ENCODE measurements at regions of chr6 and their contacts with region 1.

Region 1: DNA sequence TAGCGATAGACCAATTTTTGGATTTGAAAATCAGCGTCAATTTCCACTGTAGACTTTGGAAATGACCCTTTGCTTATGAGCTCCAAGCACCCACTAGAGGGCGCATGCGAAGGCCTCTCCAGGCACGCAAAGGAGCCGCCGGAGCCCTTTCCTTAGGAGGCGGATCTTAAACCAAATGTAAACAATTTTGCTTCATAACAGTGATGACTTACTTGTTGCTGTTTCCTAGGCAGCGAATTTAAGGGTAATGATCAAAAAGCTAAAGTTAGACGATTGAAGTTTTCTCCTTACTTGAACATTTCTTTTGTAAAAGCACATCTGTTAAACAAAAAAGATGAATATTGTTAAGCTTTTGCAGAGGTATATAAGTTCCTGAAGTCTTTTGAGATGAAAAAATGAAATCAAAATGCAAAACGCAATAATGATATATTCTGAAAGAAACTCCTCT is 29.2 kb upstream of the EXOC2 start:
- DNase-seq: no peak
- ATAC-seq: peak; percentile 98
- H3K4me3 ChIP-seq: no peak overlapping the region
- H3K27ac ChIP-seq: no peak overlapping the region
- H3K4me1 ChIP-seq: no peaks in the 10 kb centered on the region
- H3K27me3 ChIP-seq: no peaks in the 10 kb centered on the region; a peak in 1 of 4 replicates
- CTCF ChIP-seq: peak; percentile 89 to 96 (median 92)
- EP300 ChIP-seq: no peak
- POLR2A ChIP-seq: no peak
- RAD21 ChIP-seq: peak; percentile 67

Region 2: GRCh38 chr6:328136-328670 is 393.9 kb before region 1 on chr6:
- CTCF ChIA-PET with region 1: no interaction called
- POLR2A ChIA-PET with region 1: no interaction called
- RAD21 ChIA-PET with region 1: no interaction called
- SMC1A ChIA-PET with region 1: no interaction called
- in situ Hi-C with region 1: no loop called
- intact Hi-C with region 1: no loop called
- DNase-seq: peak; percentile 100
- ATAC-seq: peak; percentile 76
- H3K4me3 ChIP-seq: peak overlapping the region; percentile 37
- H3K27ac ChIP-seq: peak overlapping the region; percentile 97
- H3K4me1 ChIP-seq: peaks cover 85% of the 10 kb centered on the region
- H3K27me3 ChIP-seq: no peaks in the 10 kb centered on the region
- CTCF ChIP-seq: no peak
- EP300 ChIP-seq: peak; percentile 87 to 96
- POLR2A ChIP-seq: no peak
- RAD21 ChIP-seq: 0 out of 2 replicates have a peak, but pooled peaks have one; percentile 32

Region 3: GRCh38 chr6:710601-711571 is 11.2 kb before region 1 on chr6:
- CTCF ChIA-PET with region 1: interaction called, 49 read pairs
- POLR2A ChIA-PET with region 1: no interaction called
- RAD21 ChIA-PET with region 1: interaction called, 3 read pairs
- SMC1A ChIA-PET with region 1: interaction called, 17 read pairs
- in situ Hi-C with region 1: no loop called
- intact Hi-C with region 1: no loop called
- DNase-seq: peak; percentile 66
- ATAC-seq: peak; percentile 95
- H3K4me3 ChIP-seq: peak overlapping the region; percentile 70
- H3K27ac ChIP-seq: peak overlapping the region; percentile 94
- H3K4me1 ChIP-seq: peaks cover 8% of the 10 kb centered on the region
- H3K27me3 ChIP-seq: no peaks in the 10 kb centered on the region
- CTCF ChIP-seq: no peak
- EP300 ChIP-seq: no peak
- POLR2A ChIP-seq: peak; percentile 77
- RAD21 ChIP-seq: no peak

Region 4: GRCh38 chr6:786946-787763 is 65.1 kb after region 1 on chr6:
- CTCF ChIA-PET with region 1: interaction called, 14 read pairs
- POLR2A ChIA-PET with region 1: no interaction called
- RAD21 ChIA-PET with region 1: interaction called, 3 read pairs
- SMC1A ChIA-PET with region 1: interaction called, 3 read pairs
- in situ Hi-C with region 1: no loop called
- intact Hi-C with region 1: loop called (anchors 2 kb)
- DNase-seq: no peak
- ATAC-seq: peak; percentile 70
- H3K4me3 ChIP-seq: no peak overlapping the region
- H3K27ac ChIP-seq: no peak overlapping the region
- H3K4me1 ChIP-seq: no peaks in the 10 kb centered on the region
- H3K27me3 ChIP-seq: no peaks in the 10 kb centered on the region
- CTCF ChIP-seq: peak; percentile 50 to 75 (median 71); a peak in 5 of 6 replicates
- EP300 ChIP-seq: no peak
- POLR2A ChIP-seq: no peak
- RAD21 ChIP-seq: peak; percentile 68

Region 5: GRCh38 chr6:1190366-1190765 is 468.3 kb after region 1 on chr6:
- CTCF ChIA-PET with region 1: no interaction called
- POLR2A ChIA-PET with region 1: no interaction called
- RAD21 ChIA-PET with region 1: no interaction called
- SMC1A ChIA-PET with region 1: no interaction called
- in situ Hi-C with region 1: no loop called
- intact Hi-C with region 1: no loop called
- DNase-seq: no peak
- ATAC-seq: no peak
- H3K4me3 ChIP-seq: no peak overlapping the region
- H3K27ac ChIP-seq: no peak overlapping the region
- H3K4me1 ChIP-seq: no peaks in the 10 kb centered on the region
- H3K27me3 ChIP-seq: no peaks in the 10 kb centered on the region
- CTCF ChIP-seq: no peak
- EP300 ChIP-seq: no peak
- POLR2A ChIP-seq: no peak
- RAD21 ChIP-seq: no peak

Region 6: GRCh38 chr6:1381481-1382330 is 659.6 kb after region 1 on chr6:
- CTCF ChIA-PET with region 1: interaction called, 9 read pairs
- POLR2A ChIA-PET with region 1: no interaction called
- RAD21 ChIA-PET with region 1: no interaction called
- SMC1A ChIA-PET with region 1: interaction called, 5 read pairs
- in situ Hi-C with region 1: no loop called
- intact Hi-C with region 1: loop called (anchors 5 kb)
- DNase-seq: no peak
- ATAC-seq: peak; percentile 90
- H3K4me3 ChIP-seq: no peak overlapping the region
- H3K27ac ChIP-seq: no peak overlapping the region
- H3K4me1 ChIP-seq: no peaks in the 10 kb centered on the region
- H3K27me3 ChIP-seq: peaks cover 25 to 48% of the 10 kb centered on the region in 2 experiments
- CTCF ChIP-seq: peak; percentile 64 to 75 (median 67)
- EP300 ChIP-seq: no peak
- POLR2A ChIP-seq: no peak
- RAD21 ChIP-seq: peak; percentile 81

Region 7: DNA sequence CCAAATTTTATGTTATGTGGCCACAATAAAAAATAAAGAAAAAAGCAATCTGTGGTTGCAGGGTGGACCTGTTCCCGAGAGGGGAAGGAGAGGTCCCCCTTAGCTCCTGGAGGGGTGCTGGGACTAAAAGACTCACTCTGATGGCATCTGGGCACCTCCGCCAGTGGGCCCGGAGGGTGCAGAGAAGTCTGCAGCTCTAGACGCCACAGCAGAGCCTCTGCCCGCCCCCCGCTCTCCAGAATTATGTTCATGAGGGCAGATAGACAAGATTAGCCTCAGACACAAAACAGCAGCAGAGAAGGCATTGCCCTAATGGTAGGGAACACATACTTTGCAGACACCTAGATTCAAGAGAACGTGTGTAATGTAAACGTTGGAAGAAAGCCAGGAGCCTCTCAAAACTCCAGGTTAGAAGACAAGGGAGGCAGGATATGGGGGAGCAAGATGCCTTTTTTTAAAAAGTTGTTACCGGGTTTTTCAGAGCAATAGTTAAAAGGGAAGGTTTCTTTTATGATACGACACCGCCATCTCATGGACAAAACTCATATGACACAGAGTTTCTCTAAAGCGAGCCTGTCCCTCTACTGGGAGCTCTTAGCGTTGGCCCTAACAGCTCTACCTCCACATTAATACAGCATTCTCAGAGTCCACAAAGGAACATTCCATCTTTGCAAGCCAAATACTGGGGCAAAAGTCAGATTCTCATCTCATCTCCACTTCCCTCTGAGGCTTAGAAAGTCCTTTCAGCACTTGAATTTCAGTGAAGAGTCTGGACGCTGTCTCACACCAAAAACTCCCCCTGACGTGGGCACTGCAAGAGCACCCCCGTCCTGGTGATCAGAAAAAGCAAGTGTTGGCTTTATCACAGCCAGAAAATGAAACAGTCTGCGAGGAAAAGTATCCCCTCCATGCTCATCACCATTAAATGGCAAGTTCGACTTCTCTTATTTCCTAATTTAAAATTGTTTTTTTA is 714.5 kb after region 1 on chr6:
- CTCF ChIA-PET with region 1: interaction called, 8 read pairs
- POLR2A ChIA-PET with region 1: no interaction called
- RAD21 ChIA-PET with region 1: interaction called, 7 read pairs
- SMC1A ChIA-PET with region 1: interaction called, 4 read pairs
- in situ Hi-C with region 1: no loop called
- intact Hi-C with region 1: loop called (anchors 5 kb)
- DNase-seq: peak; percentile 30
- ATAC-seq: peak; percentile 92
- H3K4me3 ChIP-seq: no peak overlapping the region
- H3K27ac ChIP-seq: no peak overlapping the region
- H3K4me1 ChIP-seq: no peaks in the 10 kb centered on the region
- H3K27me3 ChIP-seq: peaks cover 0 to 3% of the 10 kb centered on the region in 2 experiments; a peak in 3 of 4 replicates
- CTCF ChIP-seq: peak; percentile 57 to 82 (median 68); a peak in 5 of 6 replicates
- EP300 ChIP-seq: no peak
- POLR2A ChIP-seq: no peak
- RAD21 ChIP-seq: peak; percentile 78

Region 8: DNA sequence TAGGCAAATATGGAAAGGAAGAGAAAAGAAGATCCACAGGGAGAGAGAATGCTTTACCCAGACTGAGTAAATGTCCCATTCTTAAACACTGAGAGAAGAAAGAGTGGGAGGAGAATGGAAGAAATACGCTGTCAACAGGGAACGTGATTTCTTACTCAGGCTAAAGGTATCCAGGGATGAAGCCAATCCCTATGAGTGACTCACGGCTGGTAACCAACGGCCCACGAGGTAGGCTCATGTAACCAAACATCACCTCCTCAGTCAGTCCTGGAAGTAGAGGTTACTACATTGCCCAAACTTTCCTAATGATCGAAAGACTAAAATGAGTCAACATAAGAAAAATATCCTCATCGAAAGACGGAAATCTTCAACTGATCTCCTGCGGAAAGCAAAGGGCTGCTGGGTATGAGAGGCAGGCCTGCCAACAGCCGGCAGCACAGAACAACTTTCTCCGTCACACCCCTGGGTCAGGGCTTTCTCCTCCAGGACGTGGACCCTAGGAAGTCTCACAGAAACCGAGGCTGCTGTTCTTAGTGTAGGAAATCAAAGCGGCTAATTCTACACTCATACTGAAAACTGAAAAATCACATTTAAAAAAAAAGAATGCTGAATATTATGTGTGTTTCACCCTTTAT is 1230.7 kb after region 1 on chr6:
- CTCF ChIA-PET with region 1: no interaction called
- POLR2A ChIA-PET with region 1: no interaction called
- RAD21 ChIA-PET with region 1: no interaction called
- SMC1A ChIA-PET with region 1: no interaction called
- in situ Hi-C with region 1: no loop called
- intact Hi-C with region 1: no loop called
- DNase-seq: no peak
- ATAC-seq: no peak
- H3K4me3 ChIP-seq: no peak overlapping the region
- H3K27ac ChIP-seq: no peak overlapping the region
- H3K4me1 ChIP-seq: no peaks in the 10 kb centered on the region
- H3K27me3 ChIP-seq: no peaks in the 10 kb centered on the region
- CTCF ChIP-seq: no peak
- EP300 ChIP-seq: no peak
- POLR2A ChIP-seq: no peak
- RAD21 ChIP-seq: no peak

Measured in GM12878 (cell line).